ENCODE measurements at regions of chr9 and their contacts with region 1.

Region 1: GRCh38 chr9:6024020-6024554 is 8.7 kb upstream of the RANBP6 start:
- DNase-seq: peak; percentile 36
- H3K4me3 Mint-ChIP-seq: peak overlapping the region; percentile 23
- H3K27ac Mint-ChIP-seq: no peak overlapping the region
- H3K4me1 Mint-ChIP-seq: peaks cover 4% of the 10 kb centered on the region
- H3K27me3 Mint-ChIP-seq: peaks cover 5% of the 10 kb centered on the region

Region 2: DNA sequence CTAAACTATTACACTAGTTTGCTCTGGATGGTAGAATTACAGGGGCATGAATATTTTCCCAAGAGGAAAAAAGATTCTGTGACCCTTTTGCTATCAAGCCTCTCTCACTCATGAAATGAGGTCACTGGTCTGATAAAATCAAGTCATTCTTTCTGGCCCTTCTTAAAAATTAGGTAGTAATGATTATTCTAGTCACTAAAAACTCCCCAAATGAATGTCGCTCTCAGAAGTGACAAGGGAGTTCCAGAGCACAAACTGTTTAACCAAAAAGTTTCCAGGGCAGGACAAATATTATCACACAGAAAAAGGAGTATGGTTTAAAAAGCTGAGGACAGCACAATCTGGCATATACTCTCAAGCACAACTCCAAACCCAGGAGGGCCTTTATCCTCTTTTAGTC is 203.7 kb before region 1 on chr9:
- CTCF ChIA-PET with region 1: no interaction called
- POLR2A ChIA-PET with region 1: no interaction called
- intact Hi-C with region 1: no loop called
- DNase-seq: no peak
- H3K4me3 Mint-ChIP-seq: no peak overlapping the region
- H3K27ac Mint-ChIP-seq: no peak overlapping the region
- H3K4me1 Mint-ChIP-seq: peaks cover 16% of the 10 kb centered on the region
- H3K27me3 Mint-ChIP-seq: no peaks in the 10 kb centered on the region

Region 3: DNA sequence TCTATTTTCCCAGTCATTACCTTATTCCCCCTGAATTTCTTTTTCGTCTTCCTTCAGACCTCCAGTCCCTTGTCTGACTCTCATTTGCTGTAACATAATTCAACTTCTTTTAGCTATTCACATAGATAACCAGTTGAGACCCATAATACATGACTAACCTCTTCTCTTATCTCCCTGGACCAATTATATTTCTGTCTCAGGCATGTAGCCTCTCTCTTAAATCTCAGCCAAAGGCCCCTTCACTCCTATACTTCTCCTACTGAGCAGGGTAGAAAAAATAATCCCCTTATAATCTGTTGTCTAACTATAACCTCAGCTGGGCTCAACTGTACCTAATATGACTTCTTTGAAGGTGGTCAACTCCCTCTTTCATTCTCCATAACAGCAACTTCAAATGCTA is 29.6 kb before region 1 on chr9:
- CTCF ChIA-PET with region 1: interaction called, 10 read pairs
- POLR2A ChIA-PET with region 1: no interaction called
- intact Hi-C with region 1: no loop called
- DNase-seq: no peak
- H3K4me3 Mint-ChIP-seq: no peak overlapping the region
- H3K27ac Mint-ChIP-seq: no peak overlapping the region
- H3K4me1 Mint-ChIP-seq: peaks cover 44% of the 10 kb centered on the region
- H3K27me3 Mint-ChIP-seq: no peaks in the 10 kb centered on the region

Region 4: GRCh38 chr9:6149315-6149714 is 125.2 kb after region 1 on chr9:
- CTCF ChIA-PET with region 1: no interaction called
- POLR2A ChIA-PET with region 1: no interaction called
- intact Hi-C with region 1: no loop called
- DNase-seq: no peak
- H3K4me3 Mint-ChIP-seq: no peak overlapping the region
- H3K27ac Mint-ChIP-seq: no peak overlapping the region
- H3K4me1 Mint-ChIP-seq: peaks cover 8% of the 10 kb centered on the region
- H3K27me3 Mint-ChIP-seq: peaks cover 11% of the 10 kb centered on the region